ENCODE measurements at regions of chr3 and their contacts with region 1.

Region 1: GRCh38 chr3:182238126-182238525 is 526.4 kb downstream of the SOX2 start:
- DNase-seq: no peak
- H3K4me3 ChIP-seq: no peak overlapping the region
- H3K27ac ChIP-seq: no peak overlapping the region
- H3K4me1 ChIP-seq: peaks cover 19% of the 10 kb centered on the region
- H3K27me3 ChIP-seq: no peaks in the 10 kb centered on the region
- CTCF ChIP-seq: no peak

Region 2: DNA sequence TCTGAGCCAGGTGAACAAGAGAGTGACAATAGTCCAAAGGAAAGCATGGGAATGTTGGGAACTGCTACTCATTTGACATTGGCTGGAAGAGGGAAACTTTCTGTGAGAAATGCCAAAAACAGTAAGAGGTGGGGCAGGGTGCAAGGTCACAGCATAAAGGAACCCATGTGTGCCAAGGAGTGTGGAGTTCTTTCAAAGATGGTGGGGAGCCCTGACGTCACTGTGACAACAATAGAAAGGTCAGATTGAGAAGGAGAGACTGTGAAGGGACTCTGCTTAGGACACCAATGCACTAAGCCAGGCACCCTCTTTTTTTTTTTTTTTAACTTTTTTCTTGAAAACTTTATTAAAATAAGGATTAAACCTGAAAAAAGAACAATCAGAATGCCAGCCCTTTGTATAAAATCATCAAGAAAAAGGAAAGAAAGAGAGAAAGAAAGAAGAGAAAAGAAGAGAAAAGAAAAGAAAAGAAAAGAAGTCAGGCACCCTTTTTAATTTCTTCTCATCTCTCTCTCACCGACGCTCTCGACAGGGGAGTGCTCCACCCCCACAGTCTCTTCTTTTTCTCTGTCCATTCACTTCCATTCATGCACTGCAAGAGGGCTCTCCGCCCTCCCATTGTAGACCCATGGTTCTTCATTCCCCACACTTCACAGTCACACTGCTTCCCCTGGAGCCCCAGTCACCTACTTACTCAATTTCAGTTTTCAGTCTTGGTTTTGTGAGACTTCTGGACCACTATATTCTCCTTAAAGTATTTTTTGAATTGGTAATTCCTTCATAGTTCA is 271.9 kb before region 1 on chr3:
- CTCF ChIA-PET with region 1: no interaction called
- dilution Hi-C with region 1: no loop called
- in situ Hi-C with region 1: no loop called
- intact Hi-C with region 1: loop called (anchors 5 kb)
- DNase-seq: no peak
- H3K4me3 ChIP-seq: no peak overlapping the region
- H3K27ac ChIP-seq: no peak overlapping the region
- H3K4me1 ChIP-seq: no peaks in the 10 kb centered on the region
- H3K27me3 ChIP-seq: no peaks in the 10 kb centered on the region
- CTCF ChIP-seq: no peak

Measured in mammary epithelial cell (primary cell).